ENCODE measurements at regions of chr9 and their contacts with region 1.

Region 1: DNA sequence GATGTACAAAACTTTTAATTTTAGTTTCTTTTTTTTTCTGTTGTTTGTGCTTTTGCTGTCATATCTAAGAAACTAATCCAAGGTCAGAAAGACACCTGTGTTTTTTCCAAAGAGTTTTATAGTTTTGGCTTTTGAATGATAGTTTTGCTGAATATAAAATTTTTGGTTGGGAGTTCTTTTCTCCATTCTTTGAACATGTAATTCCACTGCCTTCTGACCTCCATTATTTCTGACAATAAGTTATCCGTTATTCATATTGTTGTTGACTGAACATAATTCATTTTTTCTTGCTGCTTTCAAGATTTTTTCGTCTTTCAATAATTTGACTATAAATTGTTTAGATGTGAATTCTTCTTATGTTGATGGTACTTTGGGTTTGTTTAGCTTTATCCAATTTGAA is 82.2 kb upstream of the SLC24A2 start:
- DNase-seq: no peak
- ATAC-seq: no peak
- H3K4me3 Mint-ChIP-seq: no peak overlapping the region
- H3K27ac Mint-ChIP-seq: no peak overlapping the region
- H3K4me1 Mint-ChIP-seq: no peaks in the 10 kb centered on the region
- H3K27me3 Mint-ChIP-seq: peaks cover 13% of the 10 kb centered on the region

Region 2: GRCh38 chr9:19699756-19700155 is 171.2 kb before region 1 on chr9:
- CTCF ChIA-PET with region 1: no interaction called
- POLR2A ChIA-PET with region 1: no interaction called
- intact Hi-C with region 1: no loop called
- DNase-seq: no peak
- ATAC-seq: no peak
- H3K4me3 Mint-ChIP-seq: no peak overlapping the region
- H3K27ac Mint-ChIP-seq: no peak overlapping the region
- H3K4me1 Mint-ChIP-seq: no peaks in the 10 kb centered on the region
- H3K27me3 Mint-ChIP-seq: peaks cover 6% of the 10 kb centered on the region

Region 3: DNA sequence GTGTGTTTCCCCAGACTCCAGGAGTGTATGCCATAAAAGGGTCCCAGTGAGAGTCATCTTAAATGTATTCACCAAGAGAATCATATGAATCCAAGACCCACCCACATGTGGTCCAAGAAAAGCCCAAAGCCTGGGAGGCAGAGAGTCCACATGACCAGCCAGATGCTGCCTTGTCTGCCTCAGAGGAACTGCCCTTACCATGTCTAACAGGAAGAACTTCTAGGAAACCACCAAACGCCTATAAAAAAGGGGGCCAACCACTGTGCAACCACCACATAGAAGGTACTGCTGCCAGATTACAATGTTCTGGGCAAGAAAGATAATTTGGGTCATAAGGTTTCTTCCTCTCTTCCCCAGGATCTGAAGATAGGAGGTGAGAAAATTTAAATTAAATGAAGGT is 47.6 kb after region 1 on chr9:
- CTCF ChIA-PET with region 1: no interaction called
- POLR2A ChIA-PET with region 1: no interaction called
- intact Hi-C with region 1: loop called in 1 of 2 experiments (anchors 5 kb)
- DNase-seq: no peak
- ATAC-seq: no peak
- H3K4me3 Mint-ChIP-seq: no peak overlapping the region
- H3K27ac Mint-ChIP-seq: no peak overlapping the region
- H3K4me1 Mint-ChIP-seq: no peaks in the 10 kb centered on the region
- H3K27me3 Mint-ChIP-seq: peaks cover 21% of the 10 kb centered on the region

Region 4: DNA sequence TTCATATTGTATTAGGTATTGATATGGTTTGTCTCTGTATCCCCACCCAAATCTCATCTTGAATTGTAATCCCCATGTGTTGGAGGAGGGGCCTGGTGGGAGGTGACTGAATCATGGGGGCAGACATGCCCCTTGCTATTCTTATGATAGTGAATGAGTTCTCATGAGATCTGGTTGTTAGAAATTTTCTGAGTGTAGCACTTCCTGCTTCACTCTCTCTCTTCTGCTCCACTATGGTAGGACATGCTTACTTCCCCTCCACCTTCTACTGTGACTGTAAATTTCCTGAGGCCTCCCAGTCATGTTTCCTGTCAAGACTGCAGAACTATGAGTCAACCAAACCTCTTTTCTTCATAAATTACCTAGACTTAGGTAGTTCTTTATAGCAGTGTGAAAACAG is 105.2 kb after region 1 on chr9:
- CTCF ChIA-PET with region 1: no interaction called
- POLR2A ChIA-PET with region 1: no interaction called
- intact Hi-C with region 1: no loop called
- DNase-seq: peak; percentile 49
- ATAC-seq: peak; percentile 96
- H3K4me3 Mint-ChIP-seq: no peak overlapping the region
- H3K27ac Mint-ChIP-seq: peak overlapping the region; percentile 88
- H3K4me1 Mint-ChIP-seq: peaks cover 25% of the 10 kb centered on the region
- H3K27me3 Mint-ChIP-seq: peaks cover 2% of the 10 kb centered on the region

Measured in activated CD4-positive, alpha-beta T cell treated with anti-CD3 and anti-CD28 coated beads for 36 hours (primary cell).